Panc1 (cell line): ENCODE measurements at regions of chr12 and their contacts with region 1.

Region 1: GRCh38 chr12:57309420-57309819 is 58.4 kb upstream of the STAC3 start:
- DNase-seq: peak; percentile 18
- ATAC-seq: peak; percentile 81; the same call in 1 of the 2 replicates
- H3K4me3 ChIP-seq: no peak overlapping the region
- H3K27ac ChIP-seq: 0 out of 2 replicates have a peak overlapping the region, but pooled peaks have one; percentile 2
- H3K4me1 ChIP-seq: peaks cover 12% of the 10 kb centered on the region
- H3K27me3 ChIP-seq: no peaks in the 10 kb centered on the region
- CTCF ChIP-seq: no peak

Region 2: DNA sequence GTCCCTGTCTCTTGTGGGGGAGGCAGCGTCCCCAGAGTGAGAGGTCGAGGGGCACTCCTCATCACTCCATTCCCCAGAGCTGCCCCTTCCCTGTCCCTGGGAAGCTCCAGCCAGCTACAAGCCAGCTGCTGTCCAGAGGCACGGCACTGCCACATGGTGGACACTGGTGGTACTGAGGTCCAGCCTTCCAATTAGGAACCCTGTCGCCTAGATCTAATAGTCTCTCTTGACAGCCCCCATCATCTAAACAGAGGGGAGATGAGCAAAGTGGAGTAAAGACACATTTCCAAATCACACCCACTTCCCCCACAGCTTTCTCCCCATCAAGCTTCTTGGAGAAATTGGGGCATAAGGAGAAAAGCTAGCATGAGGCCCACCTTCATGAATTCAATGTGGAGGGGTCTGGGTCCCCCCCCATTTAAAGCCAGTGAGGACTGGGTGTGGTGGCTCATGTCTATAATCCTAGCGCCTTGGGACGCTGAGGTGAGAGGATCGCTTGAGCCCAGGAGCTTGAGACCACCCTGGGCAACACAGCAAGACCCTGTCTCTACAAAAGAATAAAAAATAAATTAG is 143.6 kb after region 1 on chr12:
- CTCF ChIA-PET with region 1: interaction called, 54 read pairs
- POLR2A ChIA-PET with region 1: interaction called, 3 read pairs
- in situ Hi-C with region 1: no loop called
- intact Hi-C with region 1: loop called (anchors 2 kb)
- DNase-seq: no peak
- ATAC-seq: peak; percentile 86
- H3K4me3 ChIP-seq: no peak overlapping the region
- H3K27ac ChIP-seq: no peak overlapping the region
- H3K4me1 ChIP-seq: no peaks in the 10 kb centered on the region
- H3K27me3 ChIP-seq: no peaks in the 10 kb centered on the region
- CTCF ChIP-seq: peak; percentile 96

Region 3: GRCh38 chr12:57459055-57459749 is 149.8 kb after region 1 on chr12:
- CTCF ChIA-PET with region 1: interaction called, 54 read pairs
- POLR2A ChIA-PET with region 1: no interaction called
- in situ Hi-C with region 1: no loop called
- intact Hi-C with region 1: no loop called
- DNase-seq: peak; percentile 91
- ATAC-seq: peak; percentile 73
- H3K4me3 ChIP-seq: peak overlapping the region; percentile 72 to 73
- H3K27ac ChIP-seq: peak overlapping the region; percentile 89
- H3K4me1 ChIP-seq: peaks cover 15% of the 10 kb centered on the region
- H3K27me3 ChIP-seq: no peaks in the 10 kb centered on the region
- CTCF ChIP-seq: peak; percentile 95

Region 4: DNA sequence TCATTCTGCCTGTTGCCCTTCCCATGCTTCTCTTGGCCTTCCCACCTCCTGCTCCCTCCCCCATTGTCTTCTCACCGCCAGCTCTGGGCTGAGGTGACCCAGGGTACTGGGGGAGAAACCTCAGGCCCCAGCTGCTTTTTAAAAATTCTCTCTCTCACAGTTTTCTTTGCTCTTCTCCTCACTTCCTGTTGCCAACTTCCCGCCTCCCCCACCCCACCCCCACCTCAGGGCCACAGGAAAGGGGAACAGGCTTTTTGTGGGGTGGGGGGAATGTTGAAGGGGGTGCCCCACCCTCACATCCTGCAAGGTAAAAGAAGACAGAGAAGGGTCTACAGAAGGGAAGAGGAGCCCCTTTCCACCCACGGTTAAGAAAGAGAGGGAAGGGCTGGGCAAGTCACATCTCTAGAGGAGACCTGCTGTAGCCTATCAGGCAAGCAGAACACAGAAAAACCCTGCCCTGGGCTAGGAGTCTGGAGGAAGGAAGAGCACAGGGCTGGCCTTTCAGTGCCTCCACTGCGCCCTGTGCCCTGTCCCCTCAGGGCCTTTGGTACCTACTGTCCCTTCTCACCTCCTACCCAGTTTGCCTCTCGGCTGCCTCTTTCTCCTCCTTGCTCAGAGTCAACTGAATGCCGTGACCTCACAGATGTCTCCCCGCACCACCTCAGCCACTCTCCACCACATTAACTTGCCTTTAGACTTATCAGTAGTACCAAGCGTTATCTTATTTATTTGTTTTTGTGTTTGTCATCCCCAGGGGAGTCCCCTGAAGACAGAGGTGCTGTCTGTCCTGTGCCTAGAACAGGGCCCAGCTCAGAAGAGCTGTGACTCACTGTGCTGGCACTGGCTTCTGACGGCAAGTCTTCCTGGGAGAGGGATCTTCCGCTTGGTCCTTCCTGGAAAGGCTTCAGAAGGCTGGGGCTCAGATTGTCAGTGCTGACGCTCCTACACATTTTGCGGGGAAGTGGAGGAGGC is 168.6 kb after region 1 on chr12:
- CTCF ChIA-PET with region 1: interaction called, 15 read pairs
- POLR2A ChIA-PET with region 1: no interaction called
- in situ Hi-C with region 1: no loop called
- intact Hi-C with region 1: no loop called
- DNase-seq: no peak
- ATAC-seq: peak; percentile 48
- H3K4me3 ChIP-seq: no peak overlapping the region
- H3K27ac ChIP-seq: no peak overlapping the region
- H3K4me1 ChIP-seq: no peaks in the 10 kb centered on the region; the same call in 1 of the 2 replicates
- H3K27me3 ChIP-seq: peaks cover 2% of the 10 kb centered on the region; the same call in 1 of the 2 replicates
- CTCF ChIP-seq: no peak